IMR-90 (cell line): ENCODE measurements at regions of chr11 and their contacts with region 1.

Region 1: GRCh38 chr11:131694526-131695424 is 324.4 kb downstream of the NTM start:
- DNase-seq: peak; percentile 69
- ATAC-seq: peak; percentile 99
- H3K4me3 ChIP-seq: no peak overlapping the region
- H3K27ac ChIP-seq: no peak overlapping the region
- H3K4me1 ChIP-seq: 0 out of 2 replicates have a peak, but pooled peaks cover 2% of the 10 kb centered on the region
- H3K27me3 ChIP-seq: no peaks in the 10 kb centered on the region; the same call in 1 of the 2 replicates
- CTCF ChIP-seq: peak; percentile 99
- POLR2A ChIP-seq: no peak
- RAD21 ChIP-seq: peak; percentile 92

Region 2: DNA sequence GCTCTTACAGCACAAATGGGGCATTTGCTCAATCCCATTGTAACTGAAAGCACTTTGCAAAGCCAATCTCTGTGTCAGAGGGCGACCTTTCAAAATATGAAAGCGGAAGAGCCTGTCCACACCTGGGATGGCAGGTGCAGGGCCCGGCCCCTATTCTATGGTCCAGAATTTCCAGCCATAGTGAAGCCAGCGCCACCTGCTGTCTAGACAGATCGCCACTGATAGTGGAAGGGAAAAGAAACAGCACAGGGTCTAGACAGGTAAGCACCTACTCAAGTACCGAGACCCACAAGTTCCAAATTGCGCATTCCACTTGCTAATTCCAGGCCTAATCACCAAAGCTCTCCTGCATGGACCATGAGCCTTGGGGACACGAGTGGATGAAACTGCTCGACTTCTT is 183.0 kb before region 1 on chr11:
- CTCF ChIA-PET with region 1: no interaction called
- POLR2A ChIA-PET with region 1: no interaction called
- dilution Hi-C with region 1: no loop called
- in situ Hi-C with region 1: no loop called
- intact Hi-C with region 1: no loop called
- DNase-seq: no peak
- ATAC-seq: no peak
- H3K4me3 ChIP-seq: no peak overlapping the region
- H3K27ac ChIP-seq: no peak overlapping the region
- H3K4me1 ChIP-seq: no peaks in the 10 kb centered on the region
- H3K27me3 ChIP-seq: no peaks in the 10 kb centered on the region
- CTCF ChIP-seq: peak; percentile 43
- POLR2A ChIP-seq: no peak
- RAD21 ChIP-seq: peak; percentile 33

Region 3: GRCh38 chr11:131739243-131739882 is 44.6 kb after region 1 on chr11:
- CTCF ChIA-PET with region 1: interaction called, 11 read pairs
- POLR2A ChIA-PET with region 1: no interaction called
- dilution Hi-C with region 1: no loop called
- in situ Hi-C with region 1: no loop called
- intact Hi-C with region 1: no loop called
- DNase-seq: peak; percentile 40
- ATAC-seq: peak; percentile 61
- H3K4me3 ChIP-seq: no peak overlapping the region
- H3K27ac ChIP-seq: no peak overlapping the region
- H3K4me1 ChIP-seq: peaks cover 5% of the 10 kb centered on the region
- H3K27me3 ChIP-seq: peaks cover 15% of the 10 kb centered on the region
- CTCF ChIP-seq: no peak
- POLR2A ChIP-seq: no peak
- RAD21 ChIP-seq: no peak

Region 4: GRCh38 chr11:131748151-131749050 is 53.6 kb after region 1 on chr11:
- CTCF ChIA-PET with region 1: interaction called, 8 read pairs
- POLR2A ChIA-PET with region 1: no interaction called
- dilution Hi-C with region 1: no loop called
- in situ Hi-C with region 1: no loop called
- intact Hi-C with region 1: loop called (anchors 1 kb)
- DNase-seq: peak; percentile 79
- ATAC-seq: peak; percentile 69
- H3K4me3 ChIP-seq: no peak overlapping the region
- H3K27ac ChIP-seq: no peak overlapping the region; the same call in 1 of the 2 replicates
- H3K4me1 ChIP-seq: peaks cover 17% of the 10 kb centered on the region
- H3K27me3 ChIP-seq: no peaks in the 10 kb centered on the region
- CTCF ChIP-seq: peak; percentile 88
- POLR2A ChIP-seq: no peak
- RAD21 ChIP-seq: peak; percentile 90

Region 5: DNA sequence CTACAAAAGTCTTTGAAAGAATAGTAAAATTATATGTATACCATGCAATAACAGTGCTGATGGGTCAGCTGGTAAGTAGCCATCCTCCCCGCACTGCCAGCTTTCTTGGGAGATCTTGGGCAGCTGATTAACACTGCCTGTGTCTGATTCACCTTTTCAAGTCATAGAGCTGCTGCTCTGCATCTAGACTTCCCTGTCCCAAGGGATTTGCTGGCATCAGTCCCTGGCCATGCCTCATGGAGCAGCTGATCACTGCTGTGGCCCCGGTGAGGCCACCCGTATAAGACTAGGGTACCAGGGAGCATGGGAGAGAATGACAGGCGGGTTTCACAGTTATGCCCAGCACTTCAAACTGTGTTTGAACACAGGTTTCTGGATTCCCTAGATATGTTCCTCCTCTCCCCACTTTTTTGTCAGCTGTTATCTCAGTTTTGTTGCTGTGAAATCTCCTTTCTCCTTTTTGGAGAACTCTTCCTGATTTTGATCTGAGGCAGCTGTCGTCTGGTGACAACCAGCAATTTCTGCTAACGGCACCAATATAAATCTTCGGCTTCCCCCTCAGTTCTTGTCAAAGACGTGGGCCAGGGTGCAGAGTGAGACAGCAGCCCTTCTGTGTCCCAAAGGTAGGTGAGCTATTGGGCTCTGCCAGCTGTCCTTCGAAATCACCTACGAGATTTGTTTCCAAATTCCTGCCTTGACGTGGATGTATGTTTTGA is 114.6 kb after region 1 on chr11:
- CTCF ChIA-PET with region 1: no interaction called
- POLR2A ChIA-PET with region 1: no interaction called
- dilution Hi-C with region 1: no loop called
- in situ Hi-C with region 1: no loop called
- intact Hi-C with region 1: no loop called
- DNase-seq: no peak
- ATAC-seq: no peak
- H3K4me3 ChIP-seq: no peak overlapping the region
- H3K27ac ChIP-seq: no peak overlapping the region
- H3K4me1 ChIP-seq: no peaks in the 10 kb centered on the region
- H3K27me3 ChIP-seq: peaks cover 40% of the 10 kb centered on the region
- CTCF ChIP-seq: no peak
- POLR2A ChIP-seq: no peak
- RAD21 ChIP-seq: no peak

Region 6: DNA sequence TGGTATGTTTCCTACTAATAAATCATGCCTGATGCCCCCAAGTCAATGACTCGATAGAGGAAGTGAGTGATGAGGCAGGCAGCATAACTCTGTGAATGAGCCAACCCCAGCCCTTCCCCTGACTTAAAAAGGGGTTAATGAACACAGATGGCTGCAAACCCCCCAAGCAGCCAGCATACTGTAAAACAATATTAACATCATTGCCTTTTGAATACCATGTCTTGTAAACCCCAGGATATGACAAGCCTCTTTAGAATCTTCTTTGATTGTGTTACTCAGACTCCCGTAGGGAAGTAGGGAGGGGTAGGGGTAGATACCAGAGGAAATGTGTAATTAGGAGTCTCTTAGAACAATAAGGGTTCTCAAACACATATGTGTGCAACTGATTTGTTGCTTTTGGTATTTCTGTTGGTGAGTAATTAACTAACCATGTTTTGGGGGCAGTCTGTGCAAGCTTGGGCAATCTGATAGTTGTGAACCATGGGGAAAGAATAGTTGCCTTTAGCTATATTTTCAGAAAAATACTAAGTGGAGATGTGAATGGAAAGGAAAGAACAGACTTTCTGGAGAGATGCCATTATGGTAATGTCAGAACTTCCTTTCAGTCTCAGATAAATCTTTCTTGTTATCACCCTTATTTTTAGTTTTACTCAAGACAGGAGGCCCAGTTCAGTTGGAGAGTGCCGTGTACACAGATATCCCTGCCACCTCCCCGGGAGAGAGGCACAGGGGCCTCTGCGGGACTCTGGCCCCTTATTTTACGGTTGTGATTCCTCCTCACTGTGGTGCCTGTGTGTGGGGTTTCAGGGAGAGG is 377.5 kb after region 1 on chr11:
- CTCF ChIA-PET with region 1: no interaction called
- POLR2A ChIA-PET with region 1: no interaction called
- dilution Hi-C with region 1: no loop called
- in situ Hi-C with region 1: no loop called
- intact Hi-C with region 1: no loop called
- DNase-seq: peak; percentile 99
- ATAC-seq: peak; percentile 88
- H3K4me3 ChIP-seq: no peak overlapping the region
- H3K27ac ChIP-seq: peak overlapping the region; percentile 91
- H3K4me1 ChIP-seq: peaks cover 29% of the 10 kb centered on the region
- H3K27me3 ChIP-seq: no peaks in the 10 kb centered on the region
- CTCF ChIP-seq: no peak
- POLR2A ChIP-seq: peak; percentile 23; the same call in 1 of the 2 replicates
- RAD21 ChIP-seq: no peak

Region 7: GRCh38 chr11:132289590-132290256 is 594.9 kb after region 1 on chr11:
- CTCF ChIA-PET with region 1: no interaction called
- POLR2A ChIA-PET with region 1: no interaction called
- dilution Hi-C with region 1: no loop called
- in situ Hi-C with region 1: no loop called
- intact Hi-C with region 1: loop called (anchors 10 kb)
- DNase-seq: no peak
- ATAC-seq: no peak
- H3K4me3 ChIP-seq: no peak overlapping the region
- H3K27ac ChIP-seq: no peak overlapping the region
- H3K4me1 ChIP-seq: no peaks in the 10 kb centered on the region
- H3K27me3 ChIP-seq: no peaks in the 10 kb centered on the region
- CTCF ChIP-seq: no peak
- POLR2A ChIP-seq: no peak
- RAD21 ChIP-seq: no peak

Region 8: GRCh38 chr11:132402071-132402684 is 707.4 kb after region 1 on chr11:
- CTCF ChIA-PET with region 1: no interaction called
- POLR2A ChIA-PET with region 1: no interaction called
- dilution Hi-C with region 1: no loop called
- in situ Hi-C with region 1: no loop called
- intact Hi-C with region 1: loop called (anchors 2 kb)
- DNase-seq: peak; percentile 51
- ATAC-seq: peak; percentile 88
- H3K4me3 ChIP-seq: no peak overlapping the region
- H3K27ac ChIP-seq: no peak overlapping the region
- H3K4me1 ChIP-seq: no peaks in the 10 kb centered on the region
- H3K27me3 ChIP-seq: no peaks in the 10 kb centered on the region; the same call in 1 of the 2 replicates
- CTCF ChIP-seq: peak; percentile 60
- POLR2A ChIP-seq: no peak
- RAD21 ChIP-seq: peak; percentile 85